Aorta (tissue), 5 donors: ENCODE measurements at regions of chr17 and their contacts with region 1.

Region 1: GRCh38 chr17:40480501-40481003 is 20.9 kb downstream of the TNS4 start:
- DNase-seq: no peak
- ATAC-seq: no peak
- H3K4me3 ChIP-seq: no peak overlapping the region
- H3K27ac ChIP-seq: no peak overlapping the region
- H3K4me1 ChIP-seq: no peaks in the 10 kb centered on the region
- H3K27me3 ChIP-seq: no peaks in the 10 kb centered on the region

Region 2: DNA sequence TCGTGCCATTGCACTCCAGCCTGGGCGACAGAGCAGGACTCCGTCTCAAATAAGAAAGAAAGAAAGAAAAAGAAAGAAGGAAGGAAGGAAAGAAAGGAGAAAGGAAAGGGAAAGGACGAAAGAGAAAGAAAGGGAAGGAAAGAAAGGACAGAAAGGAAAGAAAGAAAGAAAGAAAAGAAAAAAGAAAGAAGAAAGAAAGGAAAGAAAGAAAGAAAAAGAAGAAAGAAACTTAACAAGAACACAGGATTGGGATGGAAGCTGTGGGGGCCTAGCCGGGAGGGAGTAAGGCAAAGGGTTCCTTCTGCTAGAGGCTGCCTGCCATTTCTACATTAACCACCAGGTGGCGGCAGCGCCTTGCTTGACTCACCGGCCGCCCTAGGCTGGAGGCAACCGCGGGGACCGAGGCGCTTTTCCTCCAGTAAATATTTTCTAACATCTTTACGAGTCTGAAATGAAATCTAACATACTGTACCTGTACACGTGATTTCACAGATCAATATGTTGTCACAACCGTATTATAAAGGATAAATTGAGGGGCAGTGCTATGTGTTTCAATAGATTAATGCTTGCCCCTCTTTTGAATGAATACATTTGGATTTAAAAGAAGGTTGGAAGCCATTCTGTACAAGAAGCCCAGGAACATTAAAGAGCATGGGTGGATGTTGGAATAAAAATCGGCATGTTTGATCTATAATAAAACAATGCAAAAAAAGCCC is 122.1 kb before region 1 on chr17:
- intact Hi-C with region 1: no loop called
- DNase-seq: peak; percentile 92 to 97
- ATAC-seq: peak; percentile 88
- H3K4me3 ChIP-seq: no peak overlapping the region
- H3K27ac ChIP-seq: no peak overlapping the region
- H3K4me1 ChIP-seq: no peaks in the 10 kb centered on the region
- H3K27me3 ChIP-seq: no peaks in the 10 kb centered on the region

Region 3: DNA sequence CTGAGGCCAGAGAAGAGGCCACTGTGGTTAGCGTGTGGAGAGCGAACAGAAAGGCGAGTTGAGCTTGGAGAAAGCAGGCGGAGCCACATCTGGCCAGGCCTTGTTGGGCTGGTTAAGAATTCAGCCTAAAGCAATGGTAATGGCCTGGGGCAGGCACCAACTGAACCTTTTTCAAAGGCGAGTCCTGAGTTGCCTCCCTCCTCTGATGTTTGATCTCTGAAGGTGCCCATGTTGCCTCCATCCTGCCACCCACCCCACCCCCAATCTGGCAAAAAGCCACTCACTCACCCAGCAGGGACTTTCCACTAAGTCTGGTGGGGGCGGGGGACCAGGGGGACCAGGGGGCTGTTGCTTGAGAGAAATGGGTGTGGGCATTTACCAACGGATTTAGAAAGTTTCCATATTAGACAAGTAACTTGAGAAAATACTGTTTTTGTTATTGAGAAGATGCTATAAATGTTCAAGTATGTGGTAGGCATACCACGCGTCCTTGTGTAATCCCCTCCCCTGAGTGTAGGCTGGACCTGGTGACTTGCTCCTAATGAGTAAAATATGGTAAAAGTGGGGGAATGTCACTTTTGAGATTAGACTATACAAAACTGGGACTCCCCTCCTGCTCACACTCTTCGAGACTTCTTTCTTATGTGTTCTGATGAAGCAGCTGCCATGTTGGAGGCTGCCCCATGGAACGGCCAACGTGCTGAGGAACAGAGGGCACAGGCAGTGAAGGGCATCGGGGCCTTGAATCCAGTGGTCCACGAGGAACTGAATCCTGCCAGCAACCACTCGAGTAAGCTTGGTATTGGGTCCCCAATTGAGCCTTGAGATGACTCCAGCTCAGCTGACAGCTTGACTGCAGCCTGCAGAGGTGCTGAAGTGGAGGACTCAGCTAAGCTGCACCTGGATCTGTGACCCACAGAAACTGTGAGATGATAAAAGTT is 50.8 kb after region 1 on chr17:
- intact Hi-C with region 1: loop called (anchors 5 to 10 kb)
- DNase-seq: peak in 1 of 2 donors; percentile 54
- ATAC-seq: no peak
- H3K4me3 ChIP-seq: no peak overlapping the region
- H3K27ac ChIP-seq: no peak overlapping the region
- H3K4me1 ChIP-seq: no peaks in the 10 kb centered on the region
- H3K27me3 ChIP-seq: no peaks in the 10 kb centered on the region

Region 4: GRCh38 chr17:40536295-40537171 is 56.0 kb after region 1 on chr17:
- intact Hi-C with region 1: loop called (anchors 5 to 10 kb)
- DNase-seq: peak; percentile 61 to 83
- ATAC-seq: peak; percentile 46
- H3K4me3 ChIP-seq: no peak overlapping the region
- H3K27ac ChIP-seq: no peak overlapping the region
- H3K4me1 ChIP-seq: peaks cover 0 to 2% of the 10 kb centered on the region in 2 donors
- H3K27me3 ChIP-seq: no peaks in the 10 kb centered on the region